AG04450 (cell line): ENCODE measurements at regions of chr9 and their contacts with region 1.

Region 1: GRCh38 chr9:78035383-78035993 is 3.9 kb upstream of the GNAQ start:
- DNase-seq: peak; percentile 72
- H3K4me3 ChIP-seq: no peak overlapping the region
- H3K27ac ChIP-seq: no peak overlapping the region
- H3K27me3 ChIP-seq: no peaks in the 10 kb centered on the region
- CTCF ChIP-seq: peak; percentile 89

Region 2: GRCh38 chr9:77433675-77434445 is 601.6 kb before region 1 on chr9:
- CTCF ChIA-PET with region 1: interaction called, 34 read pairs
- POLR2A ChIA-PET with region 1: no interaction called
- DNase-seq: no peak
- H3K4me3 ChIP-seq: no peak overlapping the region
- H3K27ac ChIP-seq: no peak overlapping the region
- H3K27me3 ChIP-seq: no peaks in the 10 kb centered on the region
- CTCF ChIP-seq: peak; percentile 100

Region 3: GRCh38 chr9:77770340-77770739 is 265.1 kb before region 1 on chr9:
- CTCF ChIA-PET with region 1: interaction called, 11 read pairs
- POLR2A ChIA-PET with region 1: no interaction called
- DNase-seq: no peak
- H3K4me3 ChIP-seq: no peak overlapping the region
- H3K27ac ChIP-seq: no peak overlapping the region
- H3K27me3 ChIP-seq: no peaks in the 10 kb centered on the region
- CTCF ChIP-seq: no peak

Region 4: DNA sequence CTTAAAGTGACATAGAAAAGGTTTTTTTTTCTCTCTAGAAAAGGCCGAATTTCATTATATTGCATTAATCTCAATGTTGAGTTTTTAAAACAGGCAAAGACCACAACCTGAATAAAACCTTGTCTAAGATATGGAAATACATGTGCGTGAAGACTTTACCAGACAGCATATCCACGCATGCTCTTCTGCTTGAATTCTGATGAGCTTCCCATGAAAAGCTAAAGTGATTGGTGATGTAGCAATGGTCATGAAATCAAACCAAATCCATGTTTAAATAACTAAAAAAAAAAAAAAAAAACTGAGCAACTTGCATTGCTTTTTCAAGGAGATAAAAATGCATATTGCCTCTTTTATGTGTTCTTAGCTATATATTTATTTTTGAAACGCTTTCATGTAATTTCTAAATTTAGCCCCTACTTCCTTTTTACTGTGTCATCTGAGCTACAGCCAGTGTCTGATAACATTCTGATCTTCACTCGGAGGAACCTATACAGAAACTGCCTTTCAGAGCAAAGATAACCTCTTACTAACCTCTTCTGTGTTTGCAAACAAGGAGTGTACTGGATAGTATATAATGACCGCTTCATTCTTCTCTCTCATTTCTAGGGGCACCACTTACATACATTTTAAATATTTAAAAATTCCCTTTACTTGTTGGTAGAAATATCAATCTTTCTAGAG is 208.2 kb before region 1 on chr9:
- CTCF ChIA-PET with region 1: interaction called, 10 read pairs
- POLR2A ChIA-PET with region 1: no interaction called
- DNase-seq: no peak
- H3K4me3 ChIP-seq: no peak overlapping the region
- H3K27ac ChIP-seq: no peak overlapping the region
- H3K27me3 ChIP-seq: no peaks in the 10 kb centered on the region
- CTCF ChIP-seq: no peak

Region 5: DNA sequence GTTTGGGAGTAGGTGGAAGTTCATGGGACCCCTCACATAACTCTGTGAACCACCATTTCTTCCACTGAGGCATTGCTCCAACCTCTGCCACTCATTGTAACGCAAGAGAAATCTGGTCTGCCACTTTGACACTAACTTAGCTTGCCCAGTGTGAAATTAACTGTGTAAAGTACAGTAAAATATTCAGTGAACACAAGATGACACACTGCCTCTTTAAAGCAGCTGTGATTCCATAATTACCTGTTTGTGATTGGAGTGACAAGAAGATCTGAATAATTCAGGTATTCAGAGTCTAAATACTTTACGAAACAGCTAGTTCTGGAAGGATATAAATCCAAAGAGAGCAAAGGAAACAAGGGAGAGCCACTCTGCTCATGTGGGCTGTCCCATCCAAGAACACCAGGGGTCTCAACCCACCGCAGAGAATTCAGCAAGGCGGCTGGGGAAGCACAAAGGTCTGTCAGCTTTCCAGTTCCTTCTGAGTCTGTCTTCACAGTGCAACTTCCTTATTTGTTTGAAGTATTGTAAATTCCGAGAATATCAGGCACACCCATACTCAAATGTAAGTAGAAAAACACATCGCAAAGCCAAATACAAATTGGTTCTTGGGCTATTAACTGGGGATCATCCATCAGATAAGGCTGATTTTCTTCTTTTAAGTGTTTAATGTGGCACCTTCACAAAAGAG is 90.8 kb before region 1 on chr9:
- CTCF ChIA-PET with region 1: interaction called, 11 read pairs
- POLR2A ChIA-PET with region 1: interaction called, 3 read pairs
- DNase-seq: no peak
- H3K4me3 ChIP-seq: no peak overlapping the region
- H3K27ac ChIP-seq: no peak overlapping the region
- H3K27me3 ChIP-seq: no peaks in the 10 kb centered on the region
- CTCF ChIP-seq: no peak

Region 6: DNA sequence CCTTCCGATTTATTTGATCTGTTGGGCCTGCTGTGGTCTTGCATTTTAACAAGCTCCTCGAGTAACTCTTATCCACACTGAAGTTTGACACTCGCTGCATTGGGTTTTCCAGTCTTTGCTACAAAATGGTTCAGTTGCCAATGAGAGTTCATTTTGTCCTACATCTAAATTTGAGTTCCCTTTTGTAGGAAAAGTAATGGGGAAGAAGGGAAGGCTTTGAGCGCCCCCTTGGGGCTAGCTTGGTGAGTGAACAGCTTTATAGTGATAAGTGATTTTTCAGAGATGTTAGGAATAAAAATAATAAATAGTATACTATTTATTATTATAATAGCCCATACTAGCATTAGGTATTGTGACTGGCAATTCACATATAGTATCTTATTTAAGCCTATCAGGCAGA is 86.0 kb after region 1 on chr9:
- CTCF ChIA-PET with region 1: interaction called, 13 read pairs
- POLR2A ChIA-PET with region 1: no interaction called
- DNase-seq: peak; percentile 20
- H3K4me3 ChIP-seq: no peak overlapping the region
- H3K27ac ChIP-seq: no peak overlapping the region
- H3K27me3 ChIP-seq: no peaks in the 10 kb centered on the region
- CTCF ChIP-seq: peak; percentile 84